ENCODE measurements at regions of chr9 and their contacts with region 1.

Region 1: DNA sequence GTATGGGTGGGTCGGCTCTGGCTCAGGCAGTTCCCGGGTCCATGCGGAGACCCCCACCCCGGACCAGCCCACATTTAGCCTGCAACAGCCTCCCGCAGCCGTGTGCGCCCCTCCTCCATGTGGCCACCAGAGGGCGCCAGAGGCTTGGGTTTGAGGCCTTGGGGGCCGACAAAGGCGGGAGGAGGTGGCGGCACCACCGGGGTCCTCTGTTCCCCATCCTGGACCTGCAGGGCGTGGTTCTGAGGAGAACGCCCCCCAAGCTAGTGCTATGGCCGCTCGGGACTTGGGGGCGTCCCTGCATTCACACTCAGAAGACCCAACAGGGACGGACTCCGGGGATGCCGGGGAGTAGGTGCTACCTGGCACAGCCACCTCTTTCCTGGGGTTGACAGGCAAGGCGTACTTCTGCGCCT is 16.5 kb downstream of the ASS1 start:
- DNase-seq: peak; percentile 86
- ATAC-seq: peak; percentile 84
- H3K4me3 Mint-ChIP-seq: no peak overlapping the region
- H3K27ac Mint-ChIP-seq: no peak overlapping the region
- H3K4me1 Mint-ChIP-seq: no peaks in the 10 kb centered on the region
- H3K27me3 Mint-ChIP-seq: no peaks in the 10 kb centered on the region
- CTCF ChIP-seq: peak; percentile 98

Region 2: DNA sequence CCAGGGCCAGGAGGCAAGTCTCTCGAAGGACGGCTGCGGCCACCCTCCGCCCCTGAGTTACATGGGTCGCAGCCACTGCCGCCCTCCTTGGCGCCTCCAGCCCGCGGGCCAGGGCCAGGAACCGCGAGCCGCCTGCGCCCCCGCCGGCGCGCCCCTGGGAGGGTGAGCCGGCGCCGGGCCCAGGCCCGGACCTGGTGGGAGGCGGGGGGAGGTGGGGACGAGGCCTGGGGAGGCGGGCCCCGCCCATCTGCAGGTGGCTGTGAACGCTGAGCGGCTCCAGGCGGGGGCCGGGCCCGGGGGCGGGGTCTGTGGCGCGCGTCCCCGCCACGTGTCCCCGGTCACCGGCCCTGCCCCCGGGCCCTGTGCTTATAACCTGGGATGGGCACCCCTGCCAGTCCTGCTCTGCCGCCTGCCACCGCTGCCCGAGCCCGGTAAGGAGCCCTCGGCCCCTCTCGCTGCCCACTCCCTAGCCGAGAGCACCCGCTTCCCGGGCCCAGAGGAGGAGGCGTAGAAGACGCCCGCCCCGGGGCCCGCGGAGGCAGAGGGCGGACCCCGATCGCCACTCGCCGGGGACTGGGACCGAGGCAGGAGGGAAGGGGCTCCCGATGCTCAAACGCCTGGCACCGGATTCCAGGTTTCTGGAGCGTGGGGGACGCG is 16.5 kb before region 1 on chr9 and contains the start of gene ASS1:
- CTCF ChIA-PET with region 1: interaction called, 25 read pairs
- POLR2A ChIA-PET with region 1: interaction called, 7 read pairs
- DNase-seq: peak; percentile 82
- ATAC-seq: peak; percentile 63
- H3K4me3 Mint-ChIP-seq: peak within 1 kb of the TSS; percentile 71
- H3K27ac Mint-ChIP-seq: no peak within 1 kb of the TSS
- H3K4me1 Mint-ChIP-seq: peaks cover 33% of the 10 kb centered on the region
- H3K27me3 Mint-ChIP-seq: peaks cover 37% of the 10 kb centered on the region
- CTCF ChIP-seq: no peak
- total RNA-seq, gene ASS1: 71.0 to 95.7 TPM (median 74.2 TPM) in 3 replicates

Region 3: GRCh38 chr9:130626249-130626992 is 165.2 kb after region 1 on chr9:
- CTCF ChIA-PET with region 1: interaction called, 10 read pairs
- POLR2A ChIA-PET with region 1: no interaction called
- DNase-seq: no peak
- ATAC-seq: no peak
- H3K4me3 Mint-ChIP-seq: no peak overlapping the region
- H3K27ac Mint-ChIP-seq: peak overlapping the region; percentile 76
- H3K4me1 Mint-ChIP-seq: peaks cover 28% of the 10 kb centered on the region
- H3K27me3 Mint-ChIP-seq: no peaks in the 10 kb centered on the region
- CTCF ChIP-seq: no peak

Region 4: DNA sequence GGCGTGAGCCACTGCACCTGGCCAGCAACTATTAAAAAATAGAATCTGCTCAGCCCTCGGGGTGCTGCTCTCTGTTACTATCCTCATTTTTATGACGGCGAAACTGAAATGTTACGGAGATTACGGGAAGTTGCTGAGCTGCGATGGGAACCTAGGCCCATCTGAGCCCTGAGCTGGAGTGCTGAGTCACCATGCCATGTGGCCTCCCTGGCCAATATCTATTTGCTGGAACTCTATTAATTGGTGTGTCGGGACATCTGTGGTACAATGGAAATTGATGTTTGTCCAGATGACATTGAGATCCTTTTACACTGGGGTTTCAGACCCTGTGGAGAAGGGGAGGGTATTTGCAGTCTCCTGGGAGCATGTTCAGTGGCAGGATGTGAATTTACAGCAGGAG is 211.2 kb after region 1 on chr9:
- CTCF ChIA-PET with region 1: interaction called, 12 read pairs
- POLR2A ChIA-PET with region 1: no interaction called
- DNase-seq: no peak
- ATAC-seq: no peak
- H3K4me3 Mint-ChIP-seq: no peak overlapping the region
- H3K27ac Mint-ChIP-seq: no peak overlapping the region
- H3K4me1 Mint-ChIP-seq: no peaks in the 10 kb centered on the region
- H3K27me3 Mint-ChIP-seq: peaks cover 46% of the 10 kb centered on the region
- CTCF ChIP-seq: no peak

Region 5: DNA sequence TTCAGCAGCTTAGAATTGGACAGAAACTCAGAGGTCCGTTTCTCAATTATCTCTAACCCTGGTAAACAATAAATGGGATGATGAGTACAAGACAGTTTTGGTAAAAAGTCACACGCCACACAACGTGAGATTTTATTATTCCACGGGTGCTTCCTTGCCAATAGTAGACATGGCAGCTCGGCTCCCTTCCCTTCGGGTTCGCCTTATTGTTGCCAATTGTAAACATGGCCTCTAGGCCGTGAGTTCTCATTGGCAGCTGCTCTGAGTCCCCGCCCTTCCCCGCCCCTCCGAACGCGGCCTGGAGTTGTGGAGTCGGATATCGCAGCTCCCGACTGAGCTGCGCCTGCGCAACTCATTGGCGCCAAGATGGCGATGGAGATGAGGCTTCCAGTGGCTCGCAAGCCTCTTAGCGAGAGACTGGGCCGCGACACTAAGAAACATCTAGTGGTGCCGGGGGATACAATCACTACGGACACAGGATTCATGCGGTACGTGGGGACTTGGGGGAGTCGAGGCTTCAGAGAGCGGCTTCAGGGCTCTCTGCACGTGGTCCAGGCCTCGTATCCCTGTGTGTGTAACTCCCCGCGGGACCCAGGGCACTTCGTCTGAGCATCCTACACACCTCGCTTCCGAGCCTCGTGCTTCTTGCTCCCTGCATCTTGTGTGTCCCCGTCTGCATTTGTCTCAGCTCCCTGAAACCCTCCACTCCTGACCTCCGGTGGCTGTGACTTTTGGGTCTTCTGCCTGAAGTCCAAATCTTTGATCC is 232.4 kb after region 1 on chr9 and contains the start of gene EXOSC2:
- CTCF ChIA-PET with region 1: interaction called, 46 read pairs
- POLR2A ChIA-PET with region 1: interaction called, 3 read pairs
- DNase-seq: peak; percentile 98
- ATAC-seq: peak; percentile 73
- H3K4me3 Mint-ChIP-seq: peak within 1 kb of the TSS; percentile 98
- H3K27ac Mint-ChIP-seq: peak within 1 kb of the TSS; percentile 94
- H3K4me1 Mint-ChIP-seq: peaks cover 58% of the 10 kb centered on the region
- H3K27me3 Mint-ChIP-seq: no peaks in the 10 kb centered on the region
- CTCF ChIP-seq: no peak
- total RNA-seq, gene EXOSC2: 76.1 to 80.3 TPM (median 79.2 TPM) in 3 replicates